ENCODE measurements at regions of chr17 and their contacts with region 1.

Region 1: GRCh38 chr17:63478791-63479494 is 2.1 kb downstream of the ACE start:
- DNase-seq: no peak
- ATAC-seq: peak; percentile 97
- H3K4me3 ChIP-seq: no peak overlapping the region
- H3K27ac ChIP-seq: no peak overlapping the region
- H3K4me1 ChIP-seq: peaks cover 5% of the 10 kb centered on the region
- H3K27me3 ChIP-seq: peaks cover 9 to 13% of the 10 kb centered on the region in 2 experiments
- CTCF ChIP-seq: peak; percentile 85 to 94 (median 86)
- EP300 ChIP-seq: no peak
- POLR2A ChIP-seq: no peak
- RAD21 ChIP-seq: peak; percentile 90

Region 2: DNA sequence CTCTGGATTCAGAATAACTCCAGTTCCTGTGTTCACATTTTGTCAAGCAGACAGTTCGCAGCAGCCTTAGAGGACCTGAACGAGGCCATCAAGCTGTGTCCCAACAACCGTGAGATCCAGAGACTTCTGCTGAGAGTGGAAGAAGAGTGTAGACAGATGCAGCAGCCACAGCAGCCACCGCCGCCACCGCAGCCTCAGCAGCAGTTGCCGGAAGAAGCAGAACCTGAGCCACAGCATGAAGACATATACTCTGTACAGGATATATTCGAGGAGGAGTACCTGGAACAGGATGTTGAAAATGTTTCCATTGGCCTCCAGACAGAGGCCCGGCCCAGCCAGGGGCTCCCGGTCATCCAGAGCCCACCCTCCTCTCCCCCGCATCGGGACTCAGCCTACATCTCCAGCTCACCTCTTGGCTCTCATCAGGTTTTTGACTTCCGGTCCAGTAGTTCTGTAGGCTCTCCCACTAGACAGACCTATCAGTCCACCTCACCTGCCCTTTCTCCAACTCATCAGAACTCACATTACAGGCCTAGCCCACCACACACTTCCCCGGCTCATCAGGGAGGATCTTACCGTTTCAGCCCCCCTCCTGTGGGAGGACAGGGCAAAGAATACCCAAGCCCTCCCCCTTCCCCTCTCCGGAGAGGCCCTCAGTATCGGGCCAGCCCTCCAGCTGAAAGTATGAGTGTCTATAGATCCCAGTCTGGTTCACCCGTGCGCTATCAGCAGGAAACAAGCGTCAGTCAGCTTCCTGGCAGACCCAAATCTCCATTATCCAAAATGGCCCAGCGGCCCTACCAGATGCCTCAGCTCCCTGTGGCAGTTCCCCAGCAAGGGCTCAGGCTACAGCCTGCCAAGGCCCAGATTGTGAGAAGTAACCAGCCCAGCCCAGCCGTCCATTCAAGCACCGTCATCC is 58.7 kb before region 1 on chr17:
- CTCF ChIA-PET with region 1: interaction called, 104 read pairs
- POLR2A ChIA-PET with region 1: no interaction called
- RAD21 ChIA-PET with region 1: interaction called, 75 read pairs
- SMC1A ChIA-PET with region 1: interaction called, 26 read pairs
- in situ Hi-C with region 1: loop called (anchors 5 kb)
- intact Hi-C with region 1: loop called (anchors 1 kb)
- DNase-seq: no peak
- ATAC-seq: no peak
- H3K4me3 ChIP-seq: no peak overlapping the region
- H3K27ac ChIP-seq: no peak overlapping the region
- H3K4me1 ChIP-seq: no peaks in the 10 kb centered on the region
- H3K27me3 ChIP-seq: peaks cover under 1 to 4% of the 10 kb centered on the region in 2 experiments; a peak in 2 of 4 replicates
- CTCF ChIP-seq: no peak
- EP300 ChIP-seq: no peak
- POLR2A ChIP-seq: no peak
- RAD21 ChIP-seq: no peak

Region 3: GRCh38 chr17:63434876-63435684 is 43.9 kb before region 1 on chr17:
- CTCF ChIA-PET with region 1: interaction called, 17 read pairs
- POLR2A ChIA-PET with region 1: no interaction called
- RAD21 ChIA-PET with region 1: interaction called, 75 read pairs
- SMC1A ChIA-PET with region 1: no interaction called
- in situ Hi-C with region 1: no loop called
- intact Hi-C with region 1: loop called (anchors 5 kb)
- DNase-seq: no peak
- ATAC-seq: no peak
- H3K4me3 ChIP-seq: no peak overlapping the region
- H3K27ac ChIP-seq: no peak overlapping the region
- H3K4me1 ChIP-seq: no peaks in the 10 kb centered on the region; the same call in 1 of the 2 replicates
- H3K27me3 ChIP-seq: no peaks in the 10 kb centered on the region
- CTCF ChIP-seq: no peak
- EP300 ChIP-seq: no peak
- POLR2A ChIP-seq: no peak
- RAD21 ChIP-seq: no peak

Region 4: DNA sequence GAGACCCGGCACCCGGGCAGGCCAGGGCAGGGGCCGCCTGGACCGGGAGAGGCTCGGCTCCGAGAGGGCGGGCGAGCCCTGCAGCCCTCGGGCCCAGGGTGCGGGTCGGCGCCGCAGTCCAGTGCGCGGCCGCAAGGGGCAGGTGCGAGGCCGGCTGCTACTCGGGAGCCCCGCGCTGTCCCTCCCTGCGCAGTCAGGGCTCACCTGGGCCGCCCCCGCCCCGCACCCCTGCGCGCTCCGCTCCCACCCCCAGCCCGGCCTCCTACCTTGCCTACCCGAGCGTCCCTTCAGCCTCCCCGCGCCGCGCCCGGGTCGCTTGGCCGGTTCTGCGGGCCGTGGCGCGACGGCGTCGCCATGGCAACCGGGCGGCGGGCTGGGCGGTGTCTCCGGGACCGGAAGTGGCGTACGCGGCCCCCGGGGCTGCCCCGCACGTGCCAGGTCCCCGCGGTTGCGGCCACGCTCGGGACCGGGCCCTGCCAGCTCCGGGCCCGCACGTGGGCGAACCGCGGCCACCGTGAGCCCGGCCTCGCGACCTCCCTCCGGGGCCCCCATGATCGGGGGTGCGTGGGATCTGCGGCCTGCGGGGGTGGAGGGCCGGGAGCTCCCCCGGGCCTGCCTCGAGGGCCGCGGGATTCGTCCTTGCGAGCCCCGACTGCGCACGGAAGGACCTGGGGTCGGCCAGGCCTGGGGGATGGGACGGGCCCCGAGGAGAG is 32.8 kb before region 1 on chr17 and contains the start of gene CYB561:
- CTCF ChIA-PET with region 1: interaction called, 9 read pairs
- POLR2A ChIA-PET with region 1: no interaction called
- RAD21 ChIA-PET with region 1: interaction called, 19 read pairs
- SMC1A ChIA-PET with region 1: interaction called, 7 read pairs
- in situ Hi-C with region 1: no loop called
- intact Hi-C with region 1: loop called (anchors 5 kb)
- DNase-seq: no peak
- ATAC-seq: peak; percentile 87
- H3K4me3 ChIP-seq: peak within 1 kb of the TSS; percentile 80
- H3K27ac ChIP-seq: peak within 1 kb of the TSS; percentile 64; the same call in 1 of the 2 replicates
- H3K4me1 ChIP-seq: peaks cover 14% of the 10 kb centered on the region
- H3K27me3 ChIP-seq: no peaks in the 10 kb centered on the region
- CTCF ChIP-seq: peak; percentile 24 to 50 (median 28); a peak in 2 of 6 replicates
- EP300 ChIP-seq: no peak
- POLR2A ChIP-seq: 0 out of 2 replicates have a peak, but pooled peaks have one; percentile 4
- RAD21 ChIP-seq: no peak
- polyA plus RNA-seq, gene CYB561: 0.52 to 0.93 TPM